ENCODE measurements at regions of chr13 and their contacts with region 1.

Region 1: DNA sequence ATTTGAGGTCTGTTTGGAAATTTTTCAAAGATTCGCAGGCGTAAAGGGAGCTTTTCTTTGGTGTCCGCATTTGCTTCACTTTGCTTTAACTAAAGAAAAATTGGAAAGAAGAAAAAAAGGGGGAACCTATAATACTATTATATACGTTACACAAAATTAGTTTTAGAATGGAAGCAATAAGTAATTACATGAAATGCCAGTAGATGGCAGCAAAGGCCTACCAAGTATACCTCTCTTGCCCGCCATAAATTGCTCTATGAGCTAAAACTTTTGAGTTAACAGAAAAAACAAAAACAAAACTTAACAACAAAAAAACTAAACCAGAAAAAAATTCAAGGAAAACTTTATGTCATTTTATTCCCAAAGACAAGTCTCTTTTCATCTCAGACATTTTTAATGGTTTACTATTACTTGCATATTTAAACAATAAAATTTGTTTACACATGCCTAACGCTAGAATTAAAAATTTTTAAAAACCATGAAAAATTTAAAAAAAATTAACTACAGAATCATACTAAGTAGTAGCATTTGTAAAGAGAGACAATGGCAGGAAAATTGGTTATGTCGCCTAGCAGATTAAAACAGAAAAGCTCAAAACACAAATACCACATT is 271.4 kb downstream of the NALCN start:
- DNase-seq: peak; percentile 63
- H3K4me3 ChIP-seq: no peak overlapping the region
- CTCF ChIP-seq: peak; percentile 51

Region 2: DNA sequence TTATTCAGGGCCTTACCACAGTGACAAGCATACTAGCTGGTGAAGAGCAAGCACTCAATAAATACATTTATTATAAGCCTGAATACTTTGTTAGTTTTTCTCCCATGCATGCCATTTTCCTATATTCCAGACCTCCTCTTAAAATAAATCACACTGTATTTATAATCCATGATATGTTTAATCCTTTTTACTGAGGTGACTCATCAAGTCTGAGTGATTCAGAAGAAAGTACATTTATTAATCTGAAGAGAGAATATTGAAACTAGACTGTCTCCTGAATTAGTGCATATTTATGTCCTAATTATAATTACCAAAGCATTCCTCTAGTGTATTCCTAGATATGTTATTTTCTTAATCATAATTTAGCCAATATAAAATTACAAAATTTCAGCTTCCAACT is 51.9 kb before region 1 on chr13:
- in situ Hi-C with region 1: no loop called
- DNase-seq: no peak
- H3K4me3 ChIP-seq: no peak overlapping the region
- CTCF ChIP-seq: no peak

Region 3: DNA sequence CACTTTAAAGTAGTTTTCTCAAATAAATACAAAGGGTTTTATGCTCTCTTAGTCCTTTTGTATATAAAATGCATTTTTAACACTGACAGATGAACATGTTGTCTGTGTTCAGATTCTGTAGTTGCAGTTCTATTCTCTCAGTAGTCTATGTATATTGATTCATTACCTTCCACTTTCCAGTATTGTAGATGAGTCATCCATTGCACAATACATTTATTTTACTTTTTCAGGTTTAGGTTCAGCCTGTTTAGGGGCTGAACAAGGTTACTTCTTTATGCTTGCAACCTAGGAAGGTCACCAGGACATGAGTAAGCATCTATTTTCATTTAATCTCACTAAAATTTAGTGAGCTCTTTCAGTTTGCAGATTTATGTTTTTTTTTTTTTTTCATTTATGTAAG is 97.8 kb after region 1 on chr13:
- in situ Hi-C with region 1: no loop called
- DNase-seq: no peak
- H3K4me3 ChIP-seq: no peak overlapping the region
- CTCF ChIP-seq: no peak

Region 4: GRCh38 chr13:101916108-101916757 is 771.3 kb after region 1 on chr13:
- in situ Hi-C with region 1: loop called (anchors 10 kb)
- DNase-seq: no peak
- H3K4me3 ChIP-seq: peak overlapping the region; percentile 37
- CTCF ChIP-seq: peak; percentile 37

Measured in astrocyte of the cerebellum (primary cell).